Naive thymus-derived CD4-positive, alpha-beta T cell (primary cell): ENCODE measurements at regions of chr14 and their contacts with region 1.

Region 1: GRCh38 chr14:39102969-39103957 is at the start of gene SEC23A:
- DNase-seq: peak; percentile 63 to 85 (median 76)
- ATAC-seq: peak; percentile 98
- H3K4me3 ChIP-seq: peak within 1 kb of the TSS; percentile 87
- H3K4me3 Mint-ChIP-seq: peak within 1 kb of the TSS; percentile 72 to 99 (median 94)
- H3K27ac ChIP-seq: peak within 1 kb of the TSS; percentile 98
- H3K27ac Mint-ChIP-seq: peak within 1 kb of the TSS; percentile 95 to 99 (median 97)
- H3K4me1 ChIP-seq: peaks cover 9 to 10% of the 10 kb centered on the region in 2 donors
- H3K4me1 Mint-ChIP-seq: peaks cover 24 to 52% (median 44%) of the 10 kb centered on the region in 7 donors
- H3K27me3 ChIP-seq: no peaks in the 10 kb centered on the region
- H3K27me3 Mint-ChIP-seq: no peaks in the 10 kb centered on the region
- total RNA-seq, gene SEC23A: 51.3 to 75.3 (median 68.9) TPM

Region 2: GRCh38 chr14:38065106-38065762 is 1038.0 kb before region 1 on chr14:
- CTCF ChIA-PET with region 1: no interaction called
- POLR2A ChIA-PET with region 1: interaction called, 3 read pairs
- intact Hi-C with region 1: loop called in 1 of 2 experiments (anchors 10 kb)
- DNase-seq: peak; percentile 8 to 90 (median 84)
- ATAC-seq: peak; percentile 98
- H3K4me3 ChIP-seq: peak overlapping the region; percentile 43
- H3K4me3 Mint-ChIP-seq: peak overlapping the region; percentile 62 to 84 (median 74)
- H3K27ac ChIP-seq: peak overlapping the region; percentile 89
- H3K27ac Mint-ChIP-seq: peak overlapping the region; percentile 88 to 98 (median 96)
- H3K4me1 ChIP-seq: peaks cover 12 to 17% of the 10 kb centered on the region in 2 donors
- H3K4me1 Mint-ChIP-seq: peaks cover 14 to 62% (median 44%) of the 10 kb centered on the region in 7 donors
- H3K27me3 ChIP-seq: no peaks in the 10 kb centered on the region
- H3K27me3 Mint-ChIP-seq: peaks cover 0 to 4% (median 0%) of the 10 kb centered on the region in 5 donors

Region 3: DNA sequence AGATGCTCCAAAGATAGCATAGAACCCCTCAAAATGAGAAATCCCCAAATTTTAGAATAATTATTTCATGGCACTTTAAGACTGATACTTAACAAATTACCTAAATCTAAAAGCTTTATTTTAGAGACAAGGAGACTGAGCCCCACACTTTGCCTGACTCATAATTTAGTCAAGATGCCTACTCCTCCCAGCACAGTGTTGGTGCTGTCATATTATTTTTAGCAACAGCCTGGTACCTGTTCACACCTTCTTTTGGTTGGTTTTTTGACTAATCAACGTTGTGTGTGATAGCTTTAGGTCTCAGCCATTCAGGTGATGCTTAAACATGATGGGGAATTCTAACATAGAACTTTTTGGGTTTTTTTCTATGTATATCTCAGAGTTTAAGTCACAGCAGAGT is 120.4 kb before region 1 on chr14:
- CTCF ChIA-PET with region 1: no interaction called
- POLR2A ChIA-PET with region 1: no interaction called
- intact Hi-C with region 1: no loop called
- DNase-seq: no peak
- ATAC-seq: no peak
- H3K4me3 ChIP-seq: no peak overlapping the region
- H3K4me3 Mint-ChIP-seq: no peak overlapping the region
- H3K27ac ChIP-seq: no peak overlapping the region
- H3K27ac Mint-ChIP-seq: no peak overlapping the region
- H3K4me1 ChIP-seq: no peaks in the 10 kb centered on the region
- H3K4me1 Mint-ChIP-seq: no peaks in the 10 kb centered on the region
- H3K27me3 ChIP-seq: no peaks in the 10 kb centered on the region
- H3K27me3 Mint-ChIP-seq: peaks cover 5 to 51% (median 41%) of the 10 kb centered on the region in 5 donors

Region 4: GRCh38 chr14:39060818-39061437 is 42.3 kb before region 1 on chr14:
- CTCF ChIA-PET with region 1: no interaction called
- POLR2A ChIA-PET with region 1: no interaction called
- intact Hi-C with region 1: no loop called
- DNase-seq: no peak
- ATAC-seq: no peak
- H3K4me3 ChIP-seq: no peak overlapping the region
- H3K4me3 Mint-ChIP-seq: no peak overlapping the region
- H3K27ac ChIP-seq: no peak overlapping the region
- H3K27ac Mint-ChIP-seq: no peak overlapping the region
- H3K4me1 ChIP-seq: no peaks in the 10 kb centered on the region
- H3K4me1 Mint-ChIP-seq: peaks cover 0 to 7% (median 0%) of the 10 kb centered on the region in 7 donors
- H3K27me3 ChIP-seq: no peaks in the 10 kb centered on the region
- H3K27me3 Mint-ChIP-seq: no peaks in the 10 kb centered on the region

Region 5: GRCh38 chr14:39169541-39169900 is 66.3 kb after region 1 on chr14:
- CTCF ChIA-PET with region 1: no interaction called
- POLR2A ChIA-PET with region 1: interaction called, 30 read pairs
- intact Hi-C with region 1: loop called (anchors 1 kb)
- DNase-seq: no peak
- ATAC-seq: no peak
- H3K4me3 ChIP-seq: peak overlapping the region; percentile 88
- H3K4me3 Mint-ChIP-seq: peak overlapping the region; percentile 88 to 100 (median 92)
- H3K27ac ChIP-seq: peak overlapping the region; percentile 98
- H3K27ac Mint-ChIP-seq: peak overlapping the region; percentile 90 to 99 (median 98)
- H3K4me1 ChIP-seq: peaks cover 20 to 31% of the 10 kb centered on the region in 2 donors
- H3K4me1 Mint-ChIP-seq: peaks cover 16 to 70% (median 59%) of the 10 kb centered on the region in 7 donors
- H3K27me3 ChIP-seq: no peaks in the 10 kb centered on the region
- H3K27me3 Mint-ChIP-seq: no peaks in the 10 kb centered on the region

Region 6: DNA sequence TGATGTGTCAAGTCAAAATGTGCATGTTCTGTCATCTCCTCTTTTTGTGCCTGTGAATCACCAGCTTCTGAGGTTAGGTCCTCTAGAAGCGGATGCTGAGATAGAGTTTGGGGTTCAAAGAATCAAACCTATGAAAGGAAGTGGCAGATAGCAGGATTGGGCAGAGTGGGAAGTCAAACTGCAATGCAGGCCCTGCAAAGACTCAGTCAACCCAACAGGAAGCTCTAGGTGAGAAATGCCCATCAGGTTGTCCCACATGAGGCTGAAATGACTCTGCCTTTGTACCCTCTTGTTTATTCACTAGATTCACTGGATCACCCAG is 125.9 kb after region 1 on chr14:
- CTCF ChIA-PET with region 1: no interaction called
- POLR2A ChIA-PET with region 1: no interaction called
- intact Hi-C with region 1: loop called in 1 of 2 experiments (anchors 2 kb)
- DNase-seq: peak in 8 of 9 donors; percentile 31 to 65 (median 54)
- ATAC-seq: peak; percentile 79
- H3K4me3 ChIP-seq: no peak overlapping the region
- H3K4me3 Mint-ChIP-seq: peak overlapping the region in 7 of 10 donors; percentile 3 to 58 (median 29)
- H3K27ac ChIP-seq: no peak overlapping the region
- H3K27ac Mint-ChIP-seq: peak overlapping the region; percentile 60 to 95 (median 84)
- H3K4me1 ChIP-seq: peaks cover 19 to 40% of the 10 kb centered on the region in 2 donors
- H3K4me1 Mint-ChIP-seq: peaks cover 20 to 52% (median 35%) of the 10 kb centered on the region in 7 donors
- H3K27me3 ChIP-seq: no peaks in the 10 kb centered on the region
- H3K27me3 Mint-ChIP-seq: no peaks in the 10 kb centered on the region

Region 7: GRCh38 chr14:39368261-39368959 is 265.1 kb after region 1 on chr14:
- CTCF ChIA-PET with region 1: no interaction called
- POLR2A ChIA-PET with region 1: no interaction called
- intact Hi-C with region 1: loop called in 1 of 2 experiments (anchors 1 kb)
- DNase-seq: peak in 2 of 9 donors; percentile 4 to 15
- ATAC-seq: no peak
- H3K4me3 ChIP-seq: no peak overlapping the region
- H3K4me3 Mint-ChIP-seq: no peak overlapping the region
- H3K27ac ChIP-seq: no peak overlapping the region
- H3K27ac Mint-ChIP-seq: peak overlapping the region in 3 of 9 donors; percentile 3 to 43 (median 13)
- H3K4me1 ChIP-seq: no peaks in the 10 kb centered on the region
- H3K4me1 Mint-ChIP-seq: peaks cover 0 to 15% (median 4%) of the 10 kb centered on the region in 7 donors
- H3K27me3 ChIP-seq: no peaks in the 10 kb centered on the region
- H3K27me3 Mint-ChIP-seq: no peaks in the 10 kb centered on the region

Region 8: DNA sequence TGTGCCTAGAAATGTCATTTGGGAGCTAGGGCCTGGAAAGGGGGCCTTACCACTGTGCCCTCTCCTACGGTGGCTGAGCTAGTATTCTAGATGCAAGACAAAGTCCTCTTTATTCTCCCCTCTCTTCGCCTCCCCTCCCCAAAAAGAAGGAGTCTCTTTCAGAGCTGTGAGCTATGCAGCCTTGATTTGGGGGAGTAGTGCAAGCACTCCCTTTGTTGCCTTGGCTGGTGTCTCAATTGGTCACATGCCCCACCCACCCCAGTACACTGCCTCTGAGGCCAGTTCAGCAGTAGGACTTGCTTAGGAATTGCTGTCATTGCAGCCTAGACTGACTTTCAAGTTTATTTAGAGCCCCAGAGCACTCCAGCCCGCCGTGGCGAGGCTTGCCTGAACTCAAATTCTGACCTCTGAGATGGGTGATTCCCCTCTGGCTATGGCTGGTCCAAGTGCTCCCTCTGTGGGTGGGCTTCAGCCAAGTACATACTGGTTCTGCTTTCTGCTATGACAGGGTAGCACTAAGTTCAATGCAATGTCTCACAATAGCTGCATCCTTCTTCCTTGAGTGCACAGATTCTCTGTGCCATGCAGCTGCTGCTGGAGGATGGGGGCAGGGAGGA is 365.9 kb after region 1 on chr14:
- CTCF ChIA-PET with region 1: no interaction called
- POLR2A ChIA-PET with region 1: interaction called, 3 read pairs
- intact Hi-C with region 1: loop called in 1 of 2 experiments (anchors 1 kb)
- DNase-seq: peak in 6 of 9 donors; percentile 3 to 20 (median 16)
- ATAC-seq: peak; percentile 59
- H3K4me3 ChIP-seq: no peak overlapping the region
- H3K4me3 Mint-ChIP-seq: no peak overlapping the region
- H3K27ac ChIP-seq: no peak overlapping the region
- H3K27ac Mint-ChIP-seq: no peak overlapping the region
- H3K4me1 ChIP-seq: no peaks in the 10 kb centered on the region
- H3K4me1 Mint-ChIP-seq: no peaks in the 10 kb centered on the region
- H3K27me3 ChIP-seq: no peaks in the 10 kb centered on the region
- H3K27me3 Mint-ChIP-seq: peaks cover 7 to 31% (median 11%) of the 10 kb centered on the region in 5 donors